Posterior cingulate gyrus (tissue), 11 donors: ENCODE measurements at regions of chr12 and their contacts with region 1.

Region 1: DNA sequence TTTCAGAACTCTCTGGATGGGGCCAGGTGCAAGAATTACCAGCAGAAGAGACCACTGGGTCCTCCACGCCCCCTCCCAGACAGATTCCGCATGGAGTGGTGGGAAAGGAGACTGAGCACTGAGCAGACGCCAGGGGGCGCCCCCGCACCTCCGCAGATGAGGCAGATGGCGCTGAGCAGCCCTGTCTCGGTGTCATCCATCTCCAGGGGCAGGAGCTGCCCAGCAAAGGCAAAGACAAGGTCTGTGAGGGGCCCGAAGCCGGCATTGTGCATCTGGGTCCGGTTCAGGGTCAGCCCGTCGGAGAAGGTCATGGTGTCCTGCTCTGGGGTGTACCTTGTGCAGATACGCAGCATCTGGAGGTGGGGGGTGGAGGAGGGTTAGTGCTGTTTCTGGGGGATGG is 6.3 kb upstream of the ITGB7 start:
- DNase-seq: peak; percentile 76 to 98 (median 90)

Region 2: DNA sequence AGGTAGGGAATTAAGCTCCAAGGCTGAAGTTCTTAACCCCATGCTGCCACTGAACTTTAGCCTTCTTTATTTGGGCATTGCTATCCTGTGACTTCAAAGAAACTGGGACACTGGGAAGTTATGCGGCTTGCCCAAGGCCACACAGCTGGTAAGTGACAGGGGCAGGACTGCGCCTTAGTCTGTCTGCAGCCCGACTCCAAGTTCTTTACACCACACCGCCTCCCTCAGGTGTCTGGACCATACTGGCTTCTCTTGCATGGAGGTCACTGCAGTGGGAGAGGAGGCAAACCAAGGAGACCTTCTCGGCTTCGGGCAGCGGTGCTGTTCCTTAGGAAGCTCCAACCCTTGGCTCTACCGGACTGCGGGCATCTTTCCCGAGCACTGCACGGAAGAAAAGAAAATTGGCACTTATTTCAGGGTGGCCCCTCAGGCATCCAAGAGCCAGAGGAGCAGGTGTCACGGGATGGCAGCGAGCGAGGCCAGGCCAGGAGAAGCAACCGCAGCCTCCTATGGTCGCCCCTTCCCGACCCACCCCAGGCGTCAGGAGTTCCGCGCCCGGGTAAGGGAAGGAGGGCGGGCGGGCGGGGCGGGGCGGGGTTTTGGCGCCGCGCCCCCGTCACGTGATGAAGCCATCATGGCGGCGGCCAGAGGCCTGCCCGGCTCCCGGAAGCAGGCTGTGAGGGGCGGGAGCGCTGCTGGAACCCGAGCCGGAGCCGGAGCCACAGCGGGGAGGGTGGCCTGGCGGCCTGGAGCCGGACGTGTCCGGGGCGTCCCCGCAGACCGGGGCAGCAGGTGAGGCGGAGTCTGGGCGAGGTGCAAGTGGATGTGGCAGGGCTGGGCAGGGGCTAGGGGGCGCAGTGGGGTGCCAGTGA is 38.4 kb after region 1 on chr12:
- intact Hi-C with region 1: loop called (anchors 1 kb)
- DNase-seq: peak; percentile 66 to 96 (median 72)

Region 3: GRCh38 chr12:53287741-53288216 is 74.4 kb after region 1 on chr12:
- intact Hi-C with region 1: loop called (anchors 1 kb)
- DNase-seq: peak in 9 of 10 donors; percentile 18 to 94 (median 71)

Region 4: GRCh38 chr12:53321074-53321814 is 107.9 kb after region 1 on chr12 and contains the start of gene AAAS:
- intact Hi-C with region 1: loop called (anchors 1 kb)
- DNase-seq: peak; percentile 90 to 99 (median 95)

Region 5: GRCh38 chr12:53344824-53345485 is 131.6 kb after region 1 on chr12:
- intact Hi-C with region 1: loop called (anchors 2 kb)
- DNase-seq: peak; percentile 65 to 96 (median 78)